Activated T-helper 2 cell treated with anti-CD3 and anti-CD28 coated beads, Interferon-gamma antibody, Interleukin-2, Interleukin-4, amounts not matched to agents 10 μg/mL and 5 μg/mL and 100 μg/mL, durations not matched to agents 14 hours and 24 hours and 36 hours (primary cell): ENCODE measurements at regions of chr6 and their contacts with region 1.

Region 1: GRCh38 chr6:1552296-1552761 is 57.4 kb upstream of the FOXC1 start:
- DNase-seq: no peak
- H3K4me3 Mint-ChIP-seq: no peak overlapping the region
- H3K27ac Mint-ChIP-seq: no peak overlapping the region
- H3K4me1 Mint-ChIP-seq: peaks cover 14% of the 10 kb centered on the region
- H3K27me3 Mint-ChIP-seq: peaks cover 25% of the 10 kb centered on the region

Region 2: DNA sequence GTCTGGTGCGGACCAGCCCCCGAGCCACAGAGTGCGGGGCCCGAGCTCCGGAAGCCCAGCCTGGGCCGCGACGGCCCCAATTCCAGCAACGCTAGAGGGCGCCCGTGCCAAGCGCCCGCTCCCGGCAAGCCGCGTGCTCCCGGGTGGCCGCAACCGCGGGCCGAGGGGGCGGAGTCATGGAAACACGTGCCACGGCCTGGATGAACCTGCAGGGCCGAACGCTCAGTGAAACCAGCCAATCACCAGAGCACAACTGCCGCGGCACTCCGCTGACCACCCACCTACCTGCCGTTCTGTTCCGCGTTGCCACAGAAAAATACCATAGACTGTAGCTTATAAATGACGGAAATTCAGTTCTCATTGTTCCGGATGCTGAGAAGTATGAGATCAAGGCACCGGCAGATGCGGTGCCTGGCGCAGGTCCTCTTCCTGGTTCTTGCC is 28.3 kb before region 1 on chr6:
- intact Hi-C with region 1: loop called (anchors 1 kb)
- DNase-seq: peak; percentile 66
- H3K4me3 Mint-ChIP-seq: peak overlapping the region; percentile 3
- H3K27ac Mint-ChIP-seq: peak overlapping the region; percentile 30
- H3K4me1 Mint-ChIP-seq: peaks cover 30% of the 10 kb centered on the region
- H3K27me3 Mint-ChIP-seq: peaks cover 13% of the 10 kb centered on the region